Heart left ventricle (tissue), 16 donors: ENCODE measurements at regions of chr4 and their contacts with region 1.

Region 1: GRCh38 chr4:74874753-74875367 is 58.1 kb upstream of the PARM1 start:
- DNase-seq: peak in 2 of 5 donors; percentile 27 to 33
- ATAC-seq: peak; percentile 64 to 90 (median 82)
- H3K4me3 ChIP-seq: no peak overlapping the region
- H3K27ac ChIP-seq: no peak overlapping the region
- H3K4me1 ChIP-seq: peaks cover 0 to 3% (median 0%) of the 10 kb centered on the region in 12 donors
- H3K27me3 ChIP-seq: no peaks in the 10 kb centered on the region
- CTCF ChIP-seq: peak; percentile 77 to 96 (median 90)
- POLR2A ChIP-seq: no peak

Region 2: DNA sequence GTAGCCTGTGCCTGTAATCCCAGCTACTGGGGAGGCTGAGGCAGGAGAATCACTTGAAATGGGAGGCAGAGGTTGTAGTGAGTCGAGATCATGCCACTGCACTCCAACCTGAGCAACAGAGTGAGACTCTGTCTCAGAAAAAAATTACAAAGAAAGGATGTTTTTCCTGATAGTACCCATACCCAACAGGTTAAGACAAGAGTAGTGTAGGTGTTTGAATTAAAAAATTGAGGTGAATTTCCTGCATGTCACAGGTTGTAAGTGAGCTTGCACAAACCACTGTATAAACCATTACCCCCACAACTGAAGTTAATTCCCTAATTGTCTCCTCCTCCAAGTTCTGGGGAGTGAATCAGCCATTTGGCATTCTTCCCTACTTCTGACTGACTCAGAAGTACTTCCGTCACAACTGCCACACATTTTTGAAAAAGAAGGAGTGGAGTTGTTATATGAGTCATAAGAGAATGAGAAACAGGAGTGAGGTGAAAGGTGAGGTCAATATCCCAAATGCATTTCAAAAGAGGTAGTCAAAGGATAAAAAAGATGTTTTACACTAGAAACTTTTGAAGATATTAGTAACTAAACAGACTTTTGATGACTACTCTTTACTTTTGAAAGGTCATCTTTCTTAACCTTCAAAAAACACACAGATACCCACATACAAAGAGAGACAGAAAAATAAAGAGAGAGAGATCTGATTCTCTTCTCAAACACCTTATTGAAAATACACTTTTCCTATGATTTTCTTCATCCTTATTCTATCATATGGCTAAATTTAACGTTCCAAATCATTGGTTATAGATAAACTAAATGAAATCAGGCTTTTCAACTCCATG is 215.1 kb before region 1 on chr4:
- intact Hi-C with region 1: no loop called
- DNase-seq: no peak
- ATAC-seq: peak in 3 of 4 donors; percentile 54 to 81 (median 61)
- H3K4me3 ChIP-seq: no peak overlapping the region
- H3K27ac ChIP-seq: no peak overlapping the region
- H3K4me1 ChIP-seq: peaks cover 0 to 8% (median 0%) of the 10 kb centered on the region in 12 donors
- H3K27me3 ChIP-seq: no peaks in the 10 kb centered on the region
- CTCF ChIP-seq: no peak
- POLR2A ChIP-seq: no peak

Region 3: GRCh38 chr4:74840936-74841509 is 33.8 kb before region 1 on chr4:
- intact Hi-C with region 1: no loop called
- DNase-seq: peak in 1 of 5 donors; percentile 28
- ATAC-seq: no peak
- H3K4me3 ChIP-seq: no peak overlapping the region
- H3K27ac ChIP-seq: no peak overlapping the region
- H3K4me1 ChIP-seq: no peaks in the 10 kb centered on the region
- H3K27me3 ChIP-seq: no peaks in the 10 kb centered on the region
- CTCF ChIP-seq: no peak
- POLR2A ChIP-seq: no peak

Region 4: GRCh38 chr4:74891037-74891436 is 16.2 kb after region 1 on chr4:
- intact Hi-C with region 1: loop called in 1 of 10 experiments (anchors 1 kb)
- DNase-seq: no peak
- ATAC-seq: no peak
- H3K4me3 ChIP-seq: no peak overlapping the region
- H3K27ac ChIP-seq: no peak overlapping the region
- H3K4me1 ChIP-seq: no peaks in the 10 kb centered on the region
- H3K27me3 ChIP-seq: no peaks in the 10 kb centered on the region
- CTCF ChIP-seq: no peak
- POLR2A ChIP-seq: no peak

Region 5: GRCh38 chr4:75110061-75110460 is 235.2 kb after region 1 on chr4:
- intact Hi-C with region 1: loop called in 7 of 10 experiments (anchors 5 to 10 kb)
- DNase-seq: no peak
- ATAC-seq: no peak
- H3K4me3 ChIP-seq: no peak overlapping the region
- H3K27ac ChIP-seq: no peak overlapping the region
- H3K4me1 ChIP-seq: no peaks in the 10 kb centered on the region
- H3K27me3 ChIP-seq: no peaks in the 10 kb centered on the region
- CTCF ChIP-seq: no peak
- POLR2A ChIP-seq: no peak

Region 6: DNA sequence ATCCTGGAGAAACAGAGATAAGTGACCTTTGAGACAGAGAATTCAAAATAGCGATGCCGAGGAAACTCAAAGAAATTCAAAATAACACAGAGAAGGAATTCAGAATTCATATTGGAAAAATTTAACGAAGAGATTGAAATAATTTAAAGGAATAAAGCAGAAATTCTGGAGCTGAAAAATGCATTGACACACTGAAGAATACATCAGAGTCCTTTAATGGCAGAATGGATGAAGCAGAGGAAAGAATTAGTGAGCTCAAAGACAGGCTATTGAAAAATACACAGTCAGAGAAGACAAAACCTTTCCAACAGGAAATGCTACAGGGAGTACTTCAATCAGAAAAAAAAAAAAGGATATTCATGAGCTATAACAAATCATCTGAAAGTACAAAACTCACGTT is 243.9 kb after region 1 on chr4:
- intact Hi-C with region 1: loop called (anchors 2 to 10 kb)
- DNase-seq: no peak
- ATAC-seq: no peak
- H3K4me3 ChIP-seq: no peak overlapping the region
- H3K27ac ChIP-seq: no peak overlapping the region
- H3K4me1 ChIP-seq: no peaks in the 10 kb centered on the region
- H3K27me3 ChIP-seq: no peaks in the 10 kb centered on the region
- CTCF ChIP-seq: no peak
- POLR2A ChIP-seq: no peak

Region 7: DNA sequence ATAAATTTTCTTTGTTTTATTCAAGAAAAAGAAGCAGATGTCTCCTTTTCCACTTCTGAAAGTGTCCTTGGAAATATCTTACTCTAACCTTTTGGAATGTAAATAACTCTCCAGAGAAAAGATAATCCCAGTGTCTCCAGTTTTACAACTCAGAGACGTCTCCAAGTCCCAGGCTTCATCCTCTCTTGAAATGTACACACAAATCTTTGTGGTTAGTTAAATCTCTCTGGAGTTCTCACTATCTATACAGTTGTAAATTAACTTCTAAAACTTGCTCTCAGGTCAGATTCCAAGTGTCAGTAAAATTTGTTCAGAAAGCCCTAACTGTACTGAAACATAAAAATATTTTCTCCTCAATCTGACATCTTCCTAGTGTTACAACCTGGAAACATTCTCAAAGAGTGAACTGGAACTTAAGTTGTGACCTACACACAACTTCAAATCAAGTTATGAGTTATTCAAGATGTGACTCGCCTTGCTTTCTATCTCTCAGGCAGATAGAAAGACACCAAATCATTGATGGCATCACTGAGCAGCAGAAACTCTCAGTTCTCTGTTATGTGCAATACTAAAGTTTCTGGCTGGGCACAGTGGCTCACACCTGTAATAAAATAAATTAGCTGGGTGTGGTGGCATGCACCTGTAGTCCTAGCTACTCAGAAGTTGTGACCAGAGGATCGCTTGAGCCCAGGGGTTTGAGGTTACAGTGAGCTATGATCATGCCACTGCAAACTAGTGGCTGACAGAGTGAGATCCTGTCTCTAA is 355.1 kb after region 1 on chr4:
- intact Hi-C with region 1: no loop called
- DNase-seq: no peak
- ATAC-seq: no peak
- H3K4me3 ChIP-seq: no peak overlapping the region
- H3K27ac ChIP-seq: no peak overlapping the region
- H3K4me1 ChIP-seq: no peaks in the 10 kb centered on the region
- H3K27me3 ChIP-seq: no peaks in the 10 kb centered on the region
- CTCF ChIP-seq: no peak
- POLR2A ChIP-seq: no peak

Region 8: DNA sequence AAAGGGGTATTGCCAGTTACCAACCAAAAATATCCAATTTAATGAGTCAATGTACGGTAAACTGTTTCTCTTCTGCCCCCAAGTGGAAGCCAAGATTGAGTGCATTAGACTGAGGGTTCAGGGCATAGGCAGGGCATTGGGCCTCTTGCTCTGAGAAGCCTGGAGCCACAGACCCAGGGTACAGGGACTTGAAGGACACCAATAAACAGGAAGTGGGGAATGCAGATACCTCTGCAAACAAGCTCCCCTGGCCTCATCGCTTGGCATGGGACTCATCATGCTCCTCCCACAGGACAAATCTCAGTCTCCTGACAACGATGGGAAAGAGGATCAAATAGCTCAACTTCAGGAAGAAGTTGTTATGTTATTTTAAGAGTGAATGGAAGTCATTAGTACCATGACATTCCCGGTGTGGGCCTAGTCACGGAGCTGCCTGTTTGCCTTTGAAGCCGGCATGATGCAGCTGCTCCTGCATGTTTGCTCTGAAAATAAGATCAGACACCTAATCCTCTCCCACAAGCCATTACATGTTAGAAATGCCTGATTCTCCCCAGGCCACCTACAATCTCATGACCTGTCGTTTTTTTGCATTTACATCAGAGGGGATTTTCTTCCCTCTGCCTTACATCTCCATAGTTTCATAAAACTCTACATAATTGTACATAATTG is 415.2 kb after region 1 on chr4:
- intact Hi-C with region 1: loop called in 2 of 10 experiments (anchors 5 to 10 kb)
- DNase-seq: no peak
- ATAC-seq: no peak
- H3K4me3 ChIP-seq: no peak overlapping the region
- H3K27ac ChIP-seq: no peak overlapping the region
- H3K4me1 ChIP-seq: no peaks in the 10 kb centered on the region
- H3K27me3 ChIP-seq: no peaks in the 10 kb centered on the region
- CTCF ChIP-seq: peak in 10 of 12 donors; percentile 10 to 36 (median 22)
- POLR2A ChIP-seq: no peak

Region 9: GRCh38 chr4:75477201-75477600 is 602.3 kb after region 1 on chr4:
- intact Hi-C with region 1: loop called in 6 of 10 experiments (anchors 10 kb)
- DNase-seq: no peak
- ATAC-seq: no peak
- H3K4me3 ChIP-seq: no peak overlapping the region
- H3K27ac ChIP-seq: no peak overlapping the region
- H3K4me1 ChIP-seq: no peaks in the 10 kb centered on the region
- H3K27me3 ChIP-seq: no peaks in the 10 kb centered on the region
- CTCF ChIP-seq: no peak
- POLR2A ChIP-seq: no peak

Region 10: GRCh38 chr4:75484190-75484589 is 609.3 kb after region 1 on chr4:
- intact Hi-C with region 1: loop called in 6 of 10 experiments (anchors 10 kb)
- DNase-seq: no peak
- ATAC-seq: no peak
- H3K4me3 ChIP-seq: no peak overlapping the region
- H3K27ac ChIP-seq: no peak overlapping the region
- H3K4me1 ChIP-seq: peaks cover 0 to 7% (median 0%) of the 10 kb centered on the region in 12 donors
- H3K27me3 ChIP-seq: no peaks in the 10 kb centered on the region
- CTCF ChIP-seq: no peak
- POLR2A ChIP-seq: no peak